ENCODE measurements at regions of chr19 and their contacts with region 1.

Region 1: GRCh38 chr19:17932485-17933338 is at the start of gene CCDC124:
- DNase-seq: peak; percentile 92
- CTCF ChIP-seq: peak; percentile 99

Region 2: GRCh38 chr19:17865364-17866311 is 67.1 kb before region 1 on chr19:
- in situ Hi-C with region 1: loop called (anchors 5 kb)
- DNase-seq: no peak
- CTCF ChIP-seq: no peak

Measured in GM13977 (cell line).